ENCODE measurements at regions of chr15 and their contacts with region 1.

Region 1: GRCh38 chr15:67731112-67731761 is 94.1 kb upstream of the SKOR1 start:
- ATAC-seq: peak in 4 of 8 experiments; percentile 27 to 49 (median 37)
- H3K4me3 ChIP-seq: no peak overlapping the region
- H3K27ac ChIP-seq: no peak overlapping the region
- H3K4me1 ChIP-seq: peaks cover 12 to 28% of the 10 kb centered on the region in 2 donors

Region 2: DNA sequence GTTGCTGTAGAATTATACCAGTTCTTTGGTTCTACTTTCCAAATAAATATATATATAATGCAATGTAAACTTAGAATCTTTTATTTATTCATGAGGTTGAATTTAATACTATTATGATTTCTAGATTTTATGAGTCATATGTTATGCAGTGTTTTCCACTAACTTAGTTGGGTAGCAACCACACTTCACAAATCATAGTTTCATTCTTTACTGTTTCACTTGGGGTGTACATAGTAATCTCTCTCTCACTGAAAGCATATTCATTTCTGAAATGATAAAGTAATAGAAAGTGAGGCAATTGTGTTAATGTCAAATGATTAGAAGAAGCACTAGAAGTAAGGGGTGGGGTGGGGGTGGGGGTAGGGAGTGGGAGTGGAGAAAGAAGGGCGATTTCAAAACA is 424.1 kb before region 1 on chr15:
- in situ Hi-C with region 1: no loop called
- ATAC-seq: peak in 3 of 8 experiments; percentile 64 to 74 (median 69)
- H3K4me3 ChIP-seq: no peak overlapping the region
- H3K27ac ChIP-seq: no peak overlapping the region
- H3K4me1 ChIP-seq: peaks cover 0 to 5% of the 10 kb centered on the region in 2 donors

Region 3: DNA sequence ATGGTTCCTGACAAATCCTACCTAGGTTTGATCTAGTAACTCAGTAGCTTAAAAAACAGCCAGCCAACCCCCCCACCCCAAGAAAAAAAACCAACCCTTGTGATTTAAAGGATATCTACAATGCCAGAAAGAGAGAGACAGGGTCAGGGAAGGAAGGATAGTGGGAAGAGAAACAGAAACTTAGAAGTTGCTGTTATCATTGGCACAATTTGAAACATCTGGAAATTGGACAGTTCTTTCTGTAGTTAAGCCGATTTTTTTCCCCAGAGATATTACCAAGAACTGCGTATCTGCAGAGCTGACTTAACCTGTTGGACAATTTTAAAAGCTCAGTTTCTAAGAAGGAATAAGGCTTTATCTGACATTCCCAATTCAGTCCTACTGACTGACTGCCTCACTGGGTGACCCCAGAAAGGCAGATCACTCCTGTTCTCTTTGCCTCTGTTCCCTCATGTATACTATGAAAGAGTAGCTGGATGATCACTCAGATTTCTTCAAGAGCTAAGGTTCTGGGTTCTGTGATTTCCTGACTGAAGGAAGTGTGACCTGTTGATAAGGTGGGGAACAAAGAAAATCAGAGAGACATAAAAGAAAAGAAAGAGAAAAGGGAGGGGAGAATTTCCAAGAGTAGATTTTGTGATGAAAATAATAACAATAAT is 60.5 kb before region 1 on chr15:
- in situ Hi-C with region 1: loop called in 1 of 9 experiments (anchors 10 kb)
- ATAC-seq: no peak
- H3K4me3 ChIP-seq: no peak overlapping the region
- H3K27ac ChIP-seq: no peak overlapping the region
- H3K4me1 ChIP-seq: no peaks in the 10 kb centered on the region

Region 4: GRCh38 chr15:68114356-68114755 is 383.1 kb after region 1 on chr15:
- in situ Hi-C with region 1: no loop called
- ATAC-seq: peak in 2 of 8 experiments; percentile 22 to 28
- H3K4me3 ChIP-seq: no peak overlapping the region
- H3K27ac ChIP-seq: no peak overlapping the region
- H3K4me1 ChIP-seq: peaks cover 0 to 6% of the 10 kb centered on the region in 2 donors

Measured in motor neuron (in vitro differentiated cells).